ENCODE measurements at regions of chr13 and their contacts with region 1.

Region 1: DNA sequence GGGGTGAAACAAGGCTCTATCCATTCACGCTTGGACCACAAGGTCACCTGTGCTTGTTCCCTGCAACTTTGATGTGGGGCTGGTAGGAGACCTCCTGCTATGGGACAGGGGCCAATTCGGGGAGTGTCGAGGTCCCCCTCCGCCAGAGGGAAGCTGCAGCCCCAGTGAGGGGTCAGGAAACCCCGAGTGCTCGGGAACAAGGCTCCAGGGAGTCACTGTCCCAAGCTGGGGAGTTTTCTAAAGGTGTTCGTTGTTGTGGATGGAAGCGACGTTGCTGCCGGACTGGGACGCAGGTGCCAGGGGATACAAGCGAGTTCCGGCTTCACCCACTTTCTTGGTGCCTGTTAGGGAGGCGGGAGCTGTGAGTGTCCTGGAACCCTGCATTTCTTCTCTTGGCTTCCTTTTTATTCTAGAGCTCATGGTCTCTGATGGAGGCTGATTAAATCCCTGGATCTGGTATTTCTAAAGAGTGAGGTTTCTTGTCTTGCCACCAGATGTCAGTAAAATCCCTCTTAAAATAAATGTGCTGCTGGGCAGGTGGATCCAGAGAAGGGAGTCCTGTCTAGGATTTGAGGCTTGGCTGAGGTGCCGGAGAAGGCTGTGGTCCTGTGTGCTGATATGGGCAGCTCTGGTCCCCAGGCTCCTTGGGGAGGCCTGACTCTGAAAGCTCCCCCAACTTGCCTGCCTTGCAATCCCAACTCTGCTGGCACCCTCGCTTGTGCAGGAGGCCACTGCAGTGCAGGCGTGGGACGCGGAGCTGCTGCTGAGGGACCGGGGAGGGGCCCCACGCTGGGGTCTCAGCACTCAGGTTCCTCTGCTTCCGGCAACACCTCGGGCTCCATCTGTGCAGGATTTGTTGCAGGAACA is 153.9 kb downstream of the TEX29 start:
- DNase-seq: peak; percentile 54

Region 2: GRCh38 chr13:112443995-112444860 is 969.9 kb after region 1 on chr13:
- CTCF ChIA-PET with region 1: interaction called, 15 read pairs
- POLR2A ChIA-PET with region 1: no interaction called
- DNase-seq: peak; percentile 66

Measured in HEK293T (cell line).